ENCODE measurements at regions of chr15 and their contacts with region 1.

Region 1: GRCh38 chr15:73704869-73705645 is 20.9 kb downstream of the CD276 start:
- DNase-seq: peak; percentile 63
- ATAC-seq: peak; percentile 53
- H3K4me3 ChIP-seq: no peak overlapping the region
- H3K4me3 Mint-ChIP-seq: no peak overlapping the region
- H3K27ac ChIP-seq: no peak overlapping the region
- H3K27ac Mint-ChIP-seq: no peak overlapping the region
- H3K4me1 ChIP-seq: no peaks in the 10 kb centered on the region
- H3K4me1 Mint-ChIP-seq: no peaks in the 10 kb centered on the region
- H3K27me3 ChIP-seq: peaks cover 0 to under 1% (median 0%) of the 10 kb centered on the region in 4 experiments
- H3K27me3 Mint-ChIP-seq: peaks cover 25% of the 10 kb centered on the region
- CTCF ChIP-seq: peak; percentile 76

Region 2: GRCh38 chr15:73560501-73561117 is 144.4 kb before region 1 on chr15:
- CTCF ChIA-PET with region 1: interaction called, 34 read pairs
- POLR2A ChIA-PET with region 1: no interaction called
- intact Hi-C with region 1: loop called (anchors 1 kb)
- DNase-seq: peak; percentile 55
- ATAC-seq: peak; percentile 39
- H3K4me3 ChIP-seq: no peak overlapping the region
- H3K4me3 Mint-ChIP-seq: no peak overlapping the region
- H3K27ac ChIP-seq: no peak overlapping the region
- H3K27ac Mint-ChIP-seq: no peak overlapping the region
- H3K4me1 ChIP-seq: no peaks in the 10 kb centered on the region
- H3K4me1 Mint-ChIP-seq: no peaks in the 10 kb centered on the region
- H3K27me3 ChIP-seq: no peaks in the 10 kb centered on the region
- H3K27me3 Mint-ChIP-seq: no peaks in the 10 kb centered on the region
- CTCF ChIP-seq: peak; percentile 66

Region 3: GRCh38 chr15:73660455-73660854 is 44.6 kb before region 1 on chr15:
- CTCF ChIA-PET with region 1: no interaction called
- POLR2A ChIA-PET with region 1: no interaction called
- intact Hi-C with region 1: no loop called
- DNase-seq: no peak
- ATAC-seq: no peak
- H3K4me3 ChIP-seq: no peak overlapping the region
- H3K4me3 Mint-ChIP-seq: no peak overlapping the region
- H3K27ac ChIP-seq: no peak overlapping the region
- H3K27ac Mint-ChIP-seq: no peak overlapping the region
- H3K4me1 ChIP-seq: no peaks in the 10 kb centered on the region
- H3K4me1 Mint-ChIP-seq: no peaks in the 10 kb centered on the region
- H3K27me3 ChIP-seq: no peaks in the 10 kb centered on the region
- H3K27me3 Mint-ChIP-seq: peaks cover 23% of the 10 kb centered on the region
- CTCF ChIP-seq: no peak

Region 4: DNA sequence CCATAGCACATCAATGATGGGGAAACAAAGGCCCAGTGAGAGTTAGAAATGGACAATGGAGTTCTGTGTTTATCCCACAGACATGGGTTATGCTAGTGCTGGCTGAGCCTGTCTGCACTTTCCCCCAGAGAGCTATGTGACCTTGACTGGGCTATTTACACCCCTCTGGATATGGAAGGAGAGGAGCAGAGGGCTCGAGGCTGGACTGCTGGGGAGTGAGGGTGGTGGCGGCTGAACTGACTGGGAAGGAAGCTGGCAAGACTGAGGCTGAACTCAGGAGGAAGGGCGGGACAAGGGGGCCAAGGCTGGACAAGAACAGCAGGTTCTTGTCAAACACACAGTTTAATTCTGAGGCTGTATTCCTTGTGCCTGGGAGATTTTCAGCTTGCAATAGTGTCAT is 58.9 kb after region 1 on chr15:
- CTCF ChIA-PET with region 1: no interaction called
- POLR2A ChIA-PET with region 1: no interaction called
- intact Hi-C with region 1: no loop called
- DNase-seq: no peak
- ATAC-seq: no peak
- H3K4me3 ChIP-seq: no peak overlapping the region
- H3K4me3 Mint-ChIP-seq: no peak overlapping the region
- H3K27ac ChIP-seq: no peak overlapping the region
- H3K27ac Mint-ChIP-seq: no peak overlapping the region
- H3K4me1 ChIP-seq: no peaks in the 10 kb centered on the region
- H3K4me1 Mint-ChIP-seq: no peaks in the 10 kb centered on the region
- H3K27me3 ChIP-seq: peaks cover 0 to 11% (median 5%) of the 10 kb centered on the region in 4 experiments
- H3K27me3 Mint-ChIP-seq: peaks cover 25% of the 10 kb centered on the region
- CTCF ChIP-seq: no peak

Measured in B cell (primary cell).